WTC11 (cell line): ENCODE measurements at regions of chr4 and their contacts with region 1.

Region 1: DNA sequence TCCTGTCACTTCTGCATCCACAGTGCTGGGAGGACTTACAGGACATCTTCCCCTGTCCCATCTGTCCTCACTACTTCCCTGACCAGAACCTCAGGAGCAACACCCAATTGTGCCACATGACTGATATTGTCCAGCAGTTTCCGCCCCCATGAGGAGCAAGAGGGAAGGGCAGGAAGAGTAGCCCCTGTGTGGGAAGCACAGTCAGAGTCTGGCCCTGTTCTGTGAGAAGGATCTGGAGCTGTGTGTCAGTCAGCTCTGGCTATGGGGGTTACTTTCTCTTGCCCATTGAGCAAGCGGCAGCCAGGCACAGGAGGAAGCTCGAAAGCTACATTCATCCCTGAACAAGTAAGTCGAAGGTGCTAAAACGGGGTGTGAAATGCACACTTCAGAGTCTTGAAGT is 14.8 kb upstream of the TRIM60 start:
- DNase-seq: peak; percentile 67
- ATAC-seq: peak; percentile 100
- H3K4me3 Mint-ChIP-seq: no peak overlapping the region
- H3K27ac Mint-ChIP-seq: no peak overlapping the region
- H3K4me1 Mint-ChIP-seq: no peaks in the 10 kb centered on the region
- H3K27me3 Mint-ChIP-seq: no peaks in the 10 kb centered on the region; the same call in 1 of the 2 replicates
- CTCF ChIP-seq: peak; percentile 26; the same call in 1 of the 2 replicates

Region 2: DNA sequence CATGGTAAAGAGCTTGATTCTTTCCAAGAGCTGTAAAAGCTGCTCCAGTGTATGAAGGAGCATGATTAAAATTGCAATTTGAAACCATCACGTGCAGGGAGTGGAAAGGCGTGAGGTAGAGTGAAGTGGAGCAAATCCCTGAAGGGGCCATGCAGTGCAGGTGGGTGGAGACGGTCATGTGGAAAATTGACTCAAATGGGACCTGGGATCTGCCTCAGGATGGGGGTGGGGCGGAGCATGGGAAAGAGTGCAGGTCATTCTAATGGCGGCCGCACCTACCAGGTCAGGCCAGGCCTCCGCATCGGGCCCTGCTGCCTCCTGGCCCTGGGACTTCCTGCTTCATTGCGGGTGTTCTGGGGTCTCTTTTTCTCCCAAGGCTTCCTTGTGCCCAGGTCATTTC is 10.5 kb before region 1 on chr4:
- CTCF ChIA-PET with region 1: interaction called, 15 read pairs
- POLR2A ChIA-PET with region 1: no interaction called
- DNase-seq: no peak
- ATAC-seq: peak; percentile 61
- H3K4me3 Mint-ChIP-seq: no peak overlapping the region
- H3K27ac Mint-ChIP-seq: no peak overlapping the region
- H3K4me1 Mint-ChIP-seq: peaks cover 4% of the 10 kb centered on the region
- H3K27me3 Mint-ChIP-seq: no peaks in the 10 kb centered on the region
- CTCF ChIP-seq: no peak

Region 3: GRCh38 chr4:165364452-165365080 is 347.6 kb after region 1 on chr4:
- CTCF ChIA-PET with region 1: no interaction called
- POLR2A ChIA-PET with region 1: no interaction called
- DNase-seq: no peak
- ATAC-seq: peak; percentile 58
- H3K4me3 Mint-ChIP-seq: no peak overlapping the region
- H3K27ac Mint-ChIP-seq: no peak overlapping the region
- H3K4me1 Mint-ChIP-seq: peaks cover 16% of the 10 kb centered on the region
- H3K27me3 Mint-ChIP-seq: no peaks in the 10 kb centered on the region
- CTCF ChIP-seq: no peak